Uterus (tissue), 4 donors: ENCODE measurements at regions of chr9 and their contacts with region 1.

Region 1: DNA sequence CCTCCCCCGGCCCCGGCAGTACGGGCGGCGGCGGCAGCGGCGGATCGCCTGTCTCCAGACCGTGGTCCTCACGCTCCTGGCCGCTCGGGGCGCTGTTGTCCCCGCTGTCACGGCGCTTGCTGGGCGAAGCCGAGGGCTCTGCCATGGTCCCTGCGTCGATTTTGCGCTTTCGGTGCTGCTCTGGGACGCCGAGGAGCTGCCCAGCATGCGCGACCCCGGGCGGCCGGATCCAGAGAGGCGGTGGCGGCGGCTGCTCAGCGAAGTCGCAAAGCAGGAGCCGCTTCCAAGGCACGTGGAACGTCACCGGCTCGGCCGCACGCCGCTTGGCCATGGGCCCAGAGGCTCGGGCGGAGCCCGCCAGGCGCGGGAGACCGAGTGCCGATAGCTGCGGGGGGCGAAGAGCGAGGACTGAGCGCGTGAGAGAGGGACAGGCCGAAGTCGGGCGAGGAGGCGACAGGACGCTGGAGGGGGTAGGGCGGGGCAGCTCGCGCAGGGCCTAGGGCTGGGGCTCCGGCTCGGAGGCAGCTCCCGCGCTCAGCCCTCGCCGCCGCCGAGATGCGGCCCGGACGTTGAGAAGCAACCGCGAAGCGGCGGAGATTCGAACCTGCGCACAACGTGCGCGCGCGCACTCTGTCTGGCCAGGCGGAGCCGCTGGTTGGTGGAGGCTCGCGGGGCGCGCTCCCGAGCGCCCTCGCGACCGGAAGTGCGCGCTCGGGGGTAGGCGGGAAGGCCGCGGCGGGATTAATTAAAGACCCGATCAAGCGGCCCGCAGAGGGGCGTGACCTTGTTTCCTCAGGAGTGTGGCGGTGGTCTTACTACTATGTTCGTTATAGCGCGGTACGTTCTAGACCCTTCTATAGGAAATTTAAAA is at the start of gene C9orf40:
- DNase-seq: peak; percentile 86 to 90
- H3K4me3 ChIP-seq: peak within 1 kb of the TSS; percentile 67 to 79
- H3K27ac ChIP-seq: peak within 1 kb of the TSS; percentile 97 to 98
- H3K4me1 ChIP-seq: no peaks in the 10 kb centered on the region
- H3K27me3 ChIP-seq: no peaks in the 10 kb centered on the region
- CTCF ChIP-seq: peak; percentile 72 to 91 (median 84)
- POLR2A ChIP-seq: peak in 1 of 2 donors; percentile 56
- total RNA-seq, gene C9orf40: 2.8 to 17.6 (median 5.6) TPM

Region 2: DNA sequence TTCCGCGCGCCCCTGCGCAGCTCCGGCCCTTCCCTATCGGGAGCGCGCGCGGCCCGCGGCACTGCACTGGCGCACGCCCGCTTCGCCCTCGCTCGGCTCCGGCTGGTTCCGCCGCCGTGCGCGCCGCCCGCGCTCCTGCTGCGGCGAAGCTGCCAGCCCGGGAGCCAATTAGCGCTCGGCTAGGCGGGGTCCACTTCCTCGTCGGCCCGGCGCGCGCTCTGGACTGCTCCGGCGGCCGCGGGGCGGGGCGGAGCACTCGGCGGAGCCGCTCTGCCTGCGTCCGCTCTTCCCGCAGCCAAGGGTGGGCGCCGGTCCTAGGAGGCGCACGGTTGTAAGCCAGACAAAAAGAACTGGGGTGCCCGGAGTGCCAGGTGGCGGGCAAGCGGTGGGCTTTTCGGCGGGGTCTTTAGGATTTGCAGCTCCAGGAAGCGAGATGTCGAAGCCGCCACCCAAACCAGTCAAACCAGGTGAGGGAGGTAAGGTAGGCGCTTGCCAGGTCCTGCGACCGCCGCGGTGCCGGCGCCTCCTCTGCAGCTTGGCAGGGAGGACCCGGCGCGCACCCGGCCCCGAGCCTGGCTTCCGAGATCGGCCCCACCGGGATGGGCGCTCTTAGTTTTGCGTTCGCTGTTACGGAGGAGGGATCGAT is 135.9 kb after region 1 on chr9 and contains the start of gene OSTF1:
- intact Hi-C with region 1: loop called (anchors 10 kb)
- DNase-seq: peak; percentile 93 to 96
- H3K4me3 ChIP-seq: peak within 1 kb of the TSS; percentile 90 to 96
- H3K27ac ChIP-seq: peak within 1 kb of the TSS; percentile 93 to 96
- H3K4me1 ChIP-seq: peaks cover 0 to 9% of the 10 kb centered on the region in 2 donors
- H3K27me3 ChIP-seq: no peaks in the 10 kb centered on the region
- CTCF ChIP-seq: peak in 2 of 4 experiments; percentile 8 to 21
- POLR2A ChIP-seq: peak; percentile 70 to 93
- total RNA-seq, gene OSTF1: 3.3 to 54.4 (median 32.2) TPM